Common myeloid progenitor, CD34-positive (primary cell): ENCODE measurements at regions of chr3 and their contacts with region 1.

Region 1: DNA sequence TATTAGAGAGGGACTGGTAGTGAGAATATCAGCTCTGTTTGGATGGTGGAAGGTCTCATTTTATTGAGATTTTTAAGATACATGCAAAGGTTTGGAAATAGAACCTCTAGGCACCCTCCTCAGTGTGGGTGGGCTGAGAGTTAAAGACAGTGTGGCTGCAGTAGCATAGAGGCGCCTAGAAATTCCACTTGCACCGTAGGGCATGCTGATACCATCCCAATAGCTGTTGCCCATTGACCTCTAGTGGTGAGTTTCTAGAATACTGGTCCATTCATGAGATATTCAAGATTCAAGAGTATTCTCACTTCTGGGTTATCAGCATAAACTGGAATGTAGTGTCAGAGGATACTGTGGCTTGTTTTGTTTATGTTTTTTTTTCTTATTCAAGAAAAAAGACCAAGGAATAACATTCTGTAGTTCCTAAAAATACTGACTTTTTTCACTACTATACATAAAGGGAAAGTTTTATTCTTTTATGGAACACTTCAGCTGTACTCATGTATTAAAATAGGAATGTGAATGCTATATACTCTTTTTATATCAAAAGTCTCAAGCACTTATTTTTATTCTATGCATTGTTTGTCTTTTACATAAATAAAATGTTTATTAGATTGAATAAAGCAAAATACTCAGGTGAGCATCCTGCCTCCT is 87.2 kb downstream of the TGFBR2 start:
- DNase-seq: peak; percentile 73 to 83 (median 80)
- H3K4me3 ChIP-seq: no peak overlapping the region
- H3K27ac ChIP-seq: no peak overlapping the region
- H3K4me1 ChIP-seq: peaks cover 0 to 18% (median 15%) of the 10 kb centered on the region in 4 experiments
- H3K27me3 ChIP-seq: no peaks in the 10 kb centered on the region

Region 2: GRCh38 chr3:30012941-30013543 is 680.6 kb before region 1 on chr3:
- CTCF ChIA-PET with region 1: interaction called, 13 read pairs
- POLR2A ChIA-PET with region 1: no interaction called
- DNase-seq: peak; percentile 57 to 76 (median 63)
- H3K4me3 ChIP-seq: no peak overlapping the region
- H3K27ac ChIP-seq: no peak overlapping the region
- H3K4me1 ChIP-seq: peaks cover 0 to 2% (median 0%) of the 10 kb centered on the region in 4 experiments
- H3K27me3 ChIP-seq: no peaks in the 10 kb centered on the region

Region 3: GRCh38 chr3:30112902-30113484 is 580.6 kb before region 1 on chr3:
- CTCF ChIA-PET with region 1: interaction called, 38 read pairs
- POLR2A ChIA-PET with region 1: no interaction called
- DNase-seq: peak; percentile 66 to 85 (median 81)
- H3K4me3 ChIP-seq: no peak overlapping the region
- H3K27ac ChIP-seq: no peak overlapping the region
- H3K4me1 ChIP-seq: peaks cover 0 to 11% (median 3%) of the 10 kb centered on the region in 4 experiments
- H3K27me3 ChIP-seq: no peaks in the 10 kb centered on the region

Region 4: DNA sequence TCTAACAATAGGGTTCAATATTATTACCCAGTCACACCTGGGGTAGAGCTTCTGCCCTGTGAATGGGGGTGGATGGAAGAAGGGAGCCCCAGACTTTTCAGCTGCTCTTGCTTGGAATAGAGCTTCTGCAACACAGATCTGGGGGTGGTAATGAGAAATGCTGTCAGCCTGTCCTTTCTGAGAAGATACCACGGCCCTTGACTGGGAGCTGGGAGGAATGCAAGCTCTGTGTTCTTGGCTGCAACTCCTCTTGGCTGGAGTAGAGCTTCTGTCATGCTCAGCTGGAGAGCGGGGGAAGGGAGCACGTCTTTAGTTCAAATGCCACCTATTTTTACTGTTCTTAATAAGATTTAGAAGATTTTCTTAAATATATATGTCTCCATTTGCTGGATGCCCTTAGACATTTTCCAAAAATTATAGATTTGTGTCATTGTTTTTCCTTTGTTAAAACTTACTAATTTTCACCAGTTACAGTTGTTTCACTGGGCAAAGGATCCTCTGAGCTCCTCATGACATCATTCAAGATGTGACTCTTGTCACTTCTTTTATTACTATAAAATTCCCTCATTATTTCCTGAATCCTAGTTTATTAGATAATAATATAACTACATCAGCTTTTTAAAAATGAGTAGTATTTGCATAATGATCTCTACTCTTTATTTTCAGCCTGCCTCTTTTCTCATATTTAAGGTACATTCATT is 267.2 kb before region 1 on chr3:
- CTCF ChIA-PET with region 1: no interaction called
- POLR2A ChIA-PET with region 1: no interaction called
- DNase-seq: no peak
- H3K4me3 ChIP-seq: no peak overlapping the region
- H3K27ac ChIP-seq: no peak overlapping the region
- H3K4me1 ChIP-seq: no peaks in the 10 kb centered on the region
- H3K27me3 ChIP-seq: no peaks in the 10 kb centered on the region

Region 5: GRCh38 chr3:30658328-30659052 is 35.1 kb before region 1 on chr3:
- CTCF ChIA-PET with region 1: interaction called, 14 read pairs
- POLR2A ChIA-PET with region 1: no interaction called
- DNase-seq: peak in 2 of 3 donors; percentile 71 to 85
- H3K4me3 ChIP-seq: peak overlapping the region in 5 of 7 experiments; percentile 2 to 36 (median 13)
- H3K27ac ChIP-seq: peak overlapping the region in 1 of 2 experiments; percentile 50
- H3K4me1 ChIP-seq: peaks cover 31 to 72% (median 42%) of the 10 kb centered on the region in 4 experiments
- H3K27me3 ChIP-seq: no peaks in the 10 kb centered on the region

Region 6: DNA sequence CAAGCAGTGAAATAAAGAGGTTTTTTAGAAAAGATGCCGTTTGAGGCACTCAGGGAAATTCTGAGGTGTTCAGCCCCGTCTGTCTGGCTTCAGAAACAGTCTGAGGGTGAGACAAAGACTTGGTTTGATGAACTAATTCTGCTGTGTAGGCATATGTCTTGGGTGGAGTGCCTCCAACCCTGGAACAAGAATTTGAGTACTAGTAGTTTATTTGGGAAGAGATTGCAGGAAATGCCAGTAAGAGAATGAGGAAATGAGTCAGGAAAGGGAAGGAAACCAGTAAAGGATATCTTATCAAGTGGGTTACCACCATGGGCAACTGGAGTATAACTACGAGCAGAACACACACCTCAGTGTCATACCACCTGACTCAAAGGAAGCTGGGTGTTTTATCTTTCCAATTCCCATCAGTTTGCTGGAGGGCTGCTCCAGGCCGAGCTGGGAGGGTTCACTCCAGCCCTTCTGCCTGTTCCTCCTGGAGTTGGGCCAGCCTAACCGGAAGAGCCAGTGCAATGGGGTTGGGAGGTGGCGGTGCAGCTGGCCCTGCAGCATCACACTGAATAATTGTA is 11.9 kb before region 1 on chr3:
- CTCF ChIA-PET with region 1: interaction called, 11 read pairs
- POLR2A ChIA-PET with region 1: no interaction called
- DNase-seq: no peak
- H3K4me3 ChIP-seq: no peak overlapping the region
- H3K27ac ChIP-seq: no peak overlapping the region
- H3K4me1 ChIP-seq: peaks cover 0 to 34% (median 15%) of the 10 kb centered on the region in 4 experiments
- H3K27me3 ChIP-seq: no peaks in the 10 kb centered on the region

Region 7: GRCh38 chr3:30760040-30760695 is 66.6 kb after region 1 on chr3:
- CTCF ChIA-PET with region 1: no interaction called
- POLR2A ChIA-PET with region 1: no interaction called
- DNase-seq: peak in 2 of 3 donors; percentile 68 to 75
- H3K4me3 ChIP-seq: no peak overlapping the region
- H3K27ac ChIP-seq: no peak overlapping the region
- H3K4me1 ChIP-seq: peaks cover 0 to 6% (median 2%) of the 10 kb centered on the region in 4 experiments
- H3K27me3 ChIP-seq: no peaks in the 10 kb centered on the region